ENCODE measurements at regions of chr3 and their contacts with region 1.

Region 1: DNA sequence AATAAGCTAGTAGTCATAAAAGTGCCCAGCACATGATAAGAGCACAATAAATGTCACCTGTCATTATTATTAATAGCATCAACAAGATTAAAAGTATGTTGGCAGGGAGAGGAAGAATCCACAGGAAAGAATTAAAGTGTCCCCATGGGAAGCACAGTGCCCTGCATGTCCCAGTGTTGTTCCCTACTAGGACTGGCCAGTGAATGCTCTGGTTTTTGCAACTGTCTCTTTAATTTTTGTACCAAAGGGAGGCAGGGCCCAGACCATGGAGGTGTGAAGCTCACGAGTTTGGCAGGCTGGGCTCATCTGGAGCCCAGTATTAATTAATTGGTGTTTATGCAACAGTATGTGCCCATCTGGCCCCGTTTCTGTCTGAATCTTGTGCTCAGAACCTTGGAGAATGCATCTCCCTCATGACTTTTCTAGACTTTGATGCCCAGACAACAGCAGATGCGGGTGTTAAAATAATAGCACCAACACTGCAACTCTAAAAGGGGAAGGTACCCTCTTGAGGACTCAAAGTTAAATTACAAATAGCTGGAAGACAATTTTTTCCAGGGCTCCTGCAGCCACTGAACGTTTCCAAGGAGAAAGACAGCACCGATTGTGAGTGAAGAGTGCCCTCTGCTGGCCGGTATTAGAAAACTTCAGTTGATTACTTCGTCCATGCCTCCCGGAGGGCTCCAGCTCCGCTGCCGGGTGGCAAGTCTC is 71.9 kb upstream of the SPATA12 start:
- DNase-seq: peak; percentile 82 to 95
- H3K4me3 ChIP-seq: no peak overlapping the region
- CTCF ChIP-seq: peak in 1 of 3 donors; percentile 74
- POLR2A ChIP-seq: no peak

Region 2: DNA sequence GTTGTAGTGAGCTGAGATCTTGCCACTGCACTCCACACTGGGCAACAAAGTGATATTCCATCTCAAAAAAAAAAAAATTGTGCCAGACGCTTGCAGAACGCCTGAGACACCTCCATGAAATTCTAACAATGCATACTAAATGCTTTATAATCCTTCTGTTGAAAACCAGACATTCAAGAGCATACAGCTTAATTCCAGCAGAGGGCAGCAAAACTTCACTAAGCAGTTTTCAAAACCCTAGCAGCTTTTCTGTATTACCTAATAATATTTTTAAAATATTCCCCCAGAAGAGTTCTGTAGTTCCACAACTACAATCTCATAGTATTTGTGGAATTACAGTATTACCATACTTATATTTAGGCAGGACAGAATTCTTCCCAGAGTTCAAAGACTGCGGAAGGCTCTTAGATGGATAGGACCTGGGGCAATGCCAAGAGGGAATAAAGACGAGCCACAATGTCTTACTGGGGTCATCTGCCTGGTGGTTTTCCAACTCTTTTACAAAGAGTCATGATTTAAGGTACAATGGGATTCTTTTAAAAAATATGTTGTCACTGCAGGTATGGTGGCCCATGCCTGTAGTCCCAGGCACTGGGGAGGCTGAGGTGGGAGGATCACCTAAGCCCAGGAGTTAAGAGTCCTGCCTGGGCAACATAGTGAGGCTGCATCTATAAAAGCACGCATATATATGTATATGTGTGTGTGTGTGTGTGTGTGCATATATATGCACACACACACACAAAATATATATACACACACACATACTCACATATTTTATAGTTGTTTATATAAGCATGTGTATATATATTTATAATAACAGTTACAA is 285.9 kb before region 1 on chr3:
- intact Hi-C with region 1: loop called (anchors 2 kb)
- DNase-seq: peak in 1 of 2 donors; percentile 54
- H3K4me3 ChIP-seq: no peak overlapping the region
- CTCF ChIP-seq: peak in 1 of 3 donors; percentile 86
- POLR2A ChIP-seq: no peak

Region 3: DNA sequence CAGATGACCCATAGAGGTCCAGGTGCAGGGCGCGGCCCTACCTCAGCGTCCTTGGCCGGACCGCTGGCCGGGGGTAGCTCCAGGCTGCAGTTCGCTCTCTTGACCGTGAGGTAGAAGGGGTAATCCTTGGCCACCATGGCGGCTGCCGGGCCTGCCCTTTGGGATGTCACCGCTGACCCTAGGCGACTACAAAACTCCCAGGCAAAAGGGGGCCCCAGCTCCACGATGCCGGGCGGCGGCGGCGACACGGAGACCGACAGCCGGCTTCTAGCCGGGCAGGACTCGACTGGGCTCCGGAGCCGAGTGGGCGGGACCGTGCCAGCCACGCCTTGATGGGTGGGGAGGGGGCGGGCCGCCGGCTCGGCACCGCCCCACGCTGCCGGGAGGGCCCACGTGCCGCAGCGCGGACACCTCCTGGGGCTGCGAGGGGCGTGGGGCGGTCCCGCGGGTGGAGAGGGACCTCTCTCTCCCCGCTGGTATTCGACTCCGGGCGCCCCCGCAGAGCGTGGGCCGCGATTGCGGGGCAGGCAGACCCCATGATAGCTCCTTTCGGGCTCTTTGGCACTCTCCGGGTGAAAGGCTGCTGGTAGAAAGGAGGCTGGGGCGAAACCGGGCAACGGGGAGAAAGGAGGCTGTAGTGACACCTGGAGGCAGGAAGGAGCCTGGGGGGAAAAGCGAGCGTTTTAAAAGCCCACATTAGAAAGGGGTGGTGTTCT is 186.8 kb before region 1 on chr3 and contains the start of gene ARHGEF3:
- intact Hi-C with region 1: loop called (anchors 10 kb)
- DNase-seq: peak; percentile 70 to 96
- H3K4me3 ChIP-seq: peak within 1 kb of the TSS; percentile 53
- CTCF ChIP-seq: no peak
- POLR2A ChIP-seq: no peak
- total RNA-seq, gene ARHGEF3: 13.3 to 28.5 (median 19.1) TPM

Region 4: DNA sequence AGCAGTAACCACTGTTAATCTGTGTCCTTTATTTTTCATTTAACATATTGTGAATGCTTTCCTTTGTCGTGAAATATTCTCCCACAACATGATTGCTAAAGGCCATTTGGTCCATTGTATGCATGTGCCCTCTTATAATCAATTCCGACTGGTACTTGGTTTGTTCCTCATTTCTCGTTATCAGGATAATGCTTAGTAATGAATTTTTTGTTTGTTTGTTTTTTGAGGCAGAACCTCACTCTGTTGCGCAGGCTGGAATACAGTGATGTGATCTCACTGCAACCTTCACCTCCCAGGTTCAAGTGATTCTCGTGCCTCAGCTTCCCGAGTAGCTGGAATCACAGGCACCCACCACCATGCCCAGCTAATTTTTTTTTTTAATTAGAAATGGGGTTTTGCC is 93.9 kb after region 1 on chr3:
- intact Hi-C with region 1: loop called (anchors 2 kb)
- DNase-seq: no peak
- H3K4me3 ChIP-seq: no peak overlapping the region
- CTCF ChIP-seq: no peak
- POLR2A ChIP-seq: no peak

Measured in lower leg skin (tissue), 4 donors.